ENCODE measurements at regions of chr22 and their contacts with region 1.

Region 1: DNA sequence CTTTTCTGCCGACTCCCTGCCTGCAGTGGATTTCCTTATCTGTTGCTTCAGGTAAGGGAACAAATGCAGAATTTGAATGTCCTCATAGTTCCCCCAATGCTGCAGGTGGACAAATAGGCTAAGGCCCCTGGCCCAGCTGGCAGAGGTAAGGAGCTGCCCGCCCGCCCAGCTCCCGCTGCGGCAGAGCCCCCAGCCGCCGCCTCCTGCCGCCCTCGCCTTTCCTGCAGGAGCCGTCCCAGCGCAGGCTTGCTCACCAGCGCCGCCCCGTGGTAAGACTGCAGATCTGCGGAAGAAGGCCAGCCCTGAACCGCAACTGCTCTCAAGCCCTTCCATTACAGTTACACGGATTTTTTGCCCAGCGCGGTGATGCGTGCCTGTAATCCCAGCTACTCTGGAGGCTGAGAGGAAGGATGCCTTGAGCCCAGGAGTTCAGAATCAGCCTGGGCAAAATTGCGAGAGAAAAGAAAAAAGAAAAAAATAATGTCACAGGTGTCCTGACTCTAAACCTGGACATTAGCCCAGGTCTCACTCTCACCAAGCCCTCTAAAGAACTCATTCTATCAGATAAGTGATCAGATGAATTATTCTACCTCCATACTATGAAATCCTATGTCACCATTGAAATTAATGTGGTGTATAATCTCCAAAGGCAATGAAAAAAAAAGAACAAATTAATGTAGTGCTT is 51.2 kb upstream of the EMID1 start:
- DNase-seq: peak; percentile 89
- ATAC-seq: peak; percentile 58
- H3K4me3 Mint-ChIP-seq: no peak overlapping the region
- H3K27ac Mint-ChIP-seq: no peak overlapping the region
- H3K4me1 Mint-ChIP-seq: peaks cover 49% of the 10 kb centered on the region
- H3K27me3 Mint-ChIP-seq: 0 out of 2 replicates have a peak, but pooled peaks cover 2% of the 10 kb centered on the region
- CTCF ChIP-seq: peak; percentile 97

Region 2: GRCh38 chr22:29031227-29032011 is 123.1 kb before region 1 on chr22:
- CTCF ChIA-PET with region 1: interaction called, 11 read pairs
- POLR2A ChIA-PET with region 1: no interaction called
- DNase-seq: no peak
- ATAC-seq: peak; percentile 52
- H3K4me3 Mint-ChIP-seq: peak overlapping the region; percentile 77
- H3K27ac Mint-ChIP-seq: peak overlapping the region; percentile 98
- H3K4me1 Mint-ChIP-seq: peaks cover 39% of the 10 kb centered on the region
- H3K27me3 Mint-ChIP-seq: no peaks in the 10 kb centered on the region
- CTCF ChIP-seq: no peak

Region 3: DNA sequence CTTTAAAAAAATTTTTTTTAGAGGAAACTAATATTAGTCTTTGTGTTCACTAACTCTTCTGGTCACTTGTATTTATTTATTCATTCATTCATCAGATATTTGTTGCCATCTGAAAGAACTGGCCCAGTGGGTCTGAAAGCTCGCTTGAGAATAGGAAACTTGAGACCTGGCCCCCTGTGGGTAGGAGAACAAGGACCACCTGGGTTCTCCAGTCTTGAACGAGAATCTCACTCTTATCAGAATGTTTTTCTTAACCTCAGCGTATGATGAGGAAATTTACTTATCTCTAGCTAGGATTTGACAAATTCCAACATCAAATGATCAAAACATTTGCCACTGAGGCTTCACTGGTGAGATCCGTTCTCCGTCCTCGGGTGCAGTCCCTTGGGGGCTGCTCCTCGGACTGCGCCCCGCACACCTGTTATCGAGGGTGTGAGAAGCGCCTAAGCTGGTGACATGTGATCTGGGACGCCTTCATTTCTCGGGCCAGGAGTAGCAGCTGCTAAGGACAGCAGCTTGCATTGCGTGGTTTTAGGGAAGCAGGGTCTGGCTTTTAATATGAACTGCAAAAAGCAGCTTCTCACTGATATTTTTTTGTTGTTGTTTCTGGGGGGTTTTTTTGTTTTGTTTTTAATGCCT is 99.2 kb before region 1 on chr22:
- CTCF ChIA-PET with region 1: interaction called, 40 read pairs
- POLR2A ChIA-PET with region 1: no interaction called
- DNase-seq: peak; percentile 34
- ATAC-seq: peak; percentile 46
- H3K4me3 Mint-ChIP-seq: peak overlapping the region; percentile 24
- H3K27ac Mint-ChIP-seq: peak overlapping the region; percentile 52
- H3K4me1 Mint-ChIP-seq: peaks cover 41% of the 10 kb centered on the region
- H3K27me3 Mint-ChIP-seq: no peaks in the 10 kb centered on the region
- CTCF ChIP-seq: no peak

Region 4: DNA sequence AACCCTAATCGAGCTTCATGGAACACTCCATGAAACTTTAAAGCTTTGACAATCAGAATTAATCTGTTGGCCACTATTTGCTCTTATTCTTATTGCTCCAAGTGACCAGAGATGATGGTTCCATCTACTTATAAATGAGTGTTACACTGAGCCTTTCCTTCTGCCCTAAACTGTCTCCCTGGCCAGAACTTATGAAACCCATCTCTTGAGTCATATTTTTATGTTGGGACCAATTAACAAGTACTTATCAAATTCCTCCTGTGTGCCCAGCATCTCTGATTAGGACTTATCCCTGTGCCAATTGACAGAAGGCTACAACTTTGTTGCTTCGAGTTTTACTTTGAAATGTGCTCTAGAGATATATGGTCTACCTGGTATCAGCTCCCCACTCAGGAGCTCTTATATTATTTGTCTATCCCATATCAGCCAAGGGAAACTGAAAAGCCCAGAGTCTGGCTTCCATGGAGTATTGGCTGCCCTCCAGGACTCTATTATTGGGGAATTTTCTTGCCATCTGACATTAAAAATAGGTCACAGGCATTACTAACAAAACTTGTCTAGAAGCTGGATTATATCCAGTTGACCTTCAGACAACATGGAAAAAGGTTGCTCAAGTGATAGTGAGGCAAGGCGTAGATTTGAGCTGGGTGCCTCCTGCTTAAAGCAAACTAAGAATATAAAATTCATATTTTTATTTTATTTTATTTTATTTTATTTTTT is 72.8 kb before region 1 on chr22:
- CTCF ChIA-PET with region 1: interaction called, 15 read pairs
- POLR2A ChIA-PET with region 1: no interaction called
- DNase-seq: no peak
- ATAC-seq: no peak
- H3K4me3 Mint-ChIP-seq: no peak overlapping the region
- H3K27ac Mint-ChIP-seq: no peak overlapping the region
- H3K4me1 Mint-ChIP-seq: peaks cover 32% of the 10 kb centered on the region
- H3K27me3 Mint-ChIP-seq: no peaks in the 10 kb centered on the region
- CTCF ChIP-seq: no peak

Region 5: GRCh38 chr22:29108109-29108508 is 46.4 kb before region 1 on chr22:
- CTCF ChIA-PET with region 1: interaction called, 27 read pairs
- POLR2A ChIA-PET with region 1: no interaction called
- DNase-seq: no peak
- ATAC-seq: no peak
- H3K4me3 Mint-ChIP-seq: no peak overlapping the region
- H3K27ac Mint-ChIP-seq: no peak overlapping the region
- H3K4me1 Mint-ChIP-seq: peaks cover 7% of the 10 kb centered on the region; the same call in 1 of the 2 replicates
- H3K27me3 Mint-ChIP-seq: no peaks in the 10 kb centered on the region
- CTCF ChIP-seq: no peak

Region 6: DNA sequence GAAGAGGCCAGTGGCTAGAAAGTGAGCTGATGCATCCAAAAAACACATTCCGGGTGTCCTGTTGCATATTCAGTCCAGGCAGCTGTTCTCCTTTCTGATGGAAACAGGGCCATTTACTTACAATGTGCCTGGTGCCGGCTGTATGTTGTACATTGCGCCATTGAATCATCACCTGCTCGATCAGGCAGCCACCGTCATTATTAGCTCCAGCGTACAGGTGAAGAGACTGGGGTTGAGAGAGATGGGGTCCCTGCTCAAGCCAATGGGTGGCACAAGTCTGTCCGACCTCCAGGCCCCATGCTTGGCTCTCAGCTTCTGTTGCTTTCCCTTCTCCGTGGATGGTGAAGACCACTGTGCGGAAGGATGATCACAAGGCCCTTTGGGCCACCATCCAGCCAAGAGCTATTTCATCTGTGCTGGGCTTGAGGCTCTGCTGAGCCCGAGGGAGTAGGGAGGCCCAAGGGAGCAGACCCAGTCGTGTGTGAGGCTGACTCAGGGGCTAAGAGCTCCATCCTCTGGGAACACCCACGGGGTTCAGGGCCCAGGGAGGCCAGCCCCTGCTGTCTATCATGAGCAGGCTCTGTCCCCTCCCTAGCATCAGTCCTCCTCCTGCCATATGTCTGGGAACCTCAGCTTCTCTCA is 30.5 kb after region 1 on chr22:
- CTCF ChIA-PET with region 1: interaction called, 14 read pairs
- POLR2A ChIA-PET with region 1: no interaction called
- DNase-seq: no peak
- ATAC-seq: no peak
- H3K4me3 Mint-ChIP-seq: no peak overlapping the region
- H3K27ac Mint-ChIP-seq: no peak overlapping the region; the same call in 1 of the 2 replicates
- H3K4me1 Mint-ChIP-seq: peaks cover 10% of the 10 kb centered on the region
- H3K27me3 Mint-ChIP-seq: no peaks in the 10 kb centered on the region
- CTCF ChIP-seq: no peak

Region 7: DNA sequence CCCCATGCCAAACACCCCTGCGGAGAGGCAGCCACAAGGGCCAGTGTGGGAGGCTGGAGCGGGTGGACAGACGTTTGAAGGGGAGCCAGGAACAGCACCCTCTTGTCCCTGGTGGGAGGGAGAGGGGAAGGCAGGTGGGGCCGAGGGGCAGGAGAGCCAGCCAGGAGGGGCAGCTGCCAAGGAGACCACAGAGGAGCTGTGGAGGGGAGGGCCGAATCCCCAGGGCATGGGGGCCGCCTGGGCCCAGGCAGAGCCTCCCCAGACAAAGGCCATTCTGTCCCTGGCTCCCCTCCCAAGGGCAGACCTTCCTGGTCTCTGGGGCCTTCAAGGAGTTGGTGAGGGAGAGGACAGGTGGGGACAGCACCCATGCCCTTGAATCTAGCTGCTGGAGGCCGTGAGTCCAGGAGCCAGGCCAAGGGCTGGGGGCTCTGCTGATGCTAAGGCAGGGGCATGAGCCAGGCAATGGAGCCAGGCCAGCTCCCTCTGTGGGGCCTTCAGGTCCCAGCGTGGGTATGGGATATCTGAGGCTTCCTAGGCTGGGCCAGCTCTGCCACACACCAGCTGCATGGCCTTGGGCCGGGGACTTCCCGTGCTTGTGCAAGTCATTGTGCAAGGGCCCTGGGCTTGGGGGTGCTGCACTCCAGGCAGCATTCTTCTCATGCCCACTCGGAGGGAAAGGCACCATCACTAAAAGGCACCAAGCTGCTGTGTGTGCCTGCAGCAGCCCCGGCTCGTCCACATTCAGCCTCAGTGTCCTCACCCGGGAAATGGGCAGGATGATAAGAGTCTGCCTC is 62.6 kb after region 1 on chr22:
- CTCF ChIA-PET with region 1: interaction called, 10 read pairs
- POLR2A ChIA-PET with region 1: no interaction called
- DNase-seq: no peak
- ATAC-seq: no peak
- H3K4me3 Mint-ChIP-seq: no peak overlapping the region
- H3K27ac Mint-ChIP-seq: no peak overlapping the region
- H3K4me1 Mint-ChIP-seq: peaks cover 26% of the 10 kb centered on the region
- H3K27me3 Mint-ChIP-seq: no peaks in the 10 kb centered on the region
- CTCF ChIP-seq: no peak

Region 8: DNA sequence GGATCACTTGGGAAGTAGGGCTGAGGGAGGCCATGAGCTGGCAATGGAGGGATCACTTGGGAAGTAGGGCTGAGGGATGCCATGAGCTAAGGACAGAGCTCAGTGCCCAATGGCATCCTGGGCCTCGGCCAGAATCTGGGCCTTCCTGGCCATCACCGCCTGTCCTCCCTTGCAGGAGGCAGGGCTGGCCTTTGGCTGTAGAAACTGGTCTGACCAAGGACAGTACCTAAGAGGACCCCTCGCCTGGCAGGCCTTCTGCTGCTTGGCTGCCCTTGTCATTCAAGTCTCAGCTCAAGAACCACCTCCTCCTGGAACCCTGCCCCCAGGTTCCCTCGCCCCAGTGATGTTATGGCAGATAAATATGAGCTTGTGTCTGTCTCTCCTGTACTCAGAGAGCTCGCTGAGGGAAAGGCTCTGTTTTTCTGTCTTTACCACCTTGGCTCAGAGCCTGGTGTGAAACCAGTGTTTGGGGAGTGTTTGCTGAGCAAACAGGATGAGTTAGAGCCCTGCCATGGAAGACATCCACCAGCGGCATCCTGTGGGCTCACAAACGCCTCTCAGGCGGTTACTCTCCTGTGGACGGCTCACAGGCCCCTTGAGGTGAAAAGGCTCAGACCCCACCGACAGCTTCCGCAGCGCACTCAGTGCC is 180.3 kb after region 1 on chr22:
- CTCF ChIA-PET with region 1: no interaction called
- POLR2A ChIA-PET with region 1: no interaction called
- DNase-seq: no peak
- ATAC-seq: no peak
- H3K4me3 Mint-ChIP-seq: no peak overlapping the region
- H3K27ac Mint-ChIP-seq: no peak overlapping the region
- H3K4me1 Mint-ChIP-seq: no peaks in the 10 kb centered on the region
- H3K27me3 Mint-ChIP-seq: no peaks in the 10 kb centered on the region
- CTCF ChIP-seq: no peak

Measured in WTC11 (cell line).